ENCODE measurements at regions of chr1 and their contacts with region 1.

Region 1: DNA sequence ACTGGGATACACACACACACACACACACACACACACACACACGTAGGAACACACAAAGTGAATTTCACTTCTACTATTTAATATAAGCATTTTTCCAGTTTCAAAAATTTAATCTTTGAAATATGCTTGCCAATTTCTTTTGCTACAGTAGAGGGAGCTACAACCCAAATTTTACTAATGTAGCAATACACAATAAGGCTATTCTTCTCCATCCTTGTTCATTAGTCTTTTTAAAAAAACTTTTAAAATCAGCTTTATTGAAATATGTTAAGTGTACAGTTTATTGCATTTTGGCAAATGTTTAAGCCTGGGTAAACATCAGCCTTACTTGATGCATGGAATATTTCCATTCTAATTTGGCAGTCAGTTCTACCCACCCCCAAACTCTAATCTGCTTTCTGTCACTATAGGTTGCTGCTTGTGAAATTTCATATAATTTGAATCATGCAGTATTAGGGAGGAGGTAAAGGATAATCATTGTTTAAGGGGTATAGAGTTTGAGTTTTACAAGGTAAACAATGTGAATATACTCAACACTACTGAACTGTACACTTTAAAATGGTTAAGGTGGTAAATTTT is 93.0 kb upstream of the TENT5C start:
- DNase-seq: no peak
- H3K4me3 Mint-ChIP-seq: no peak overlapping the region
- H3K27ac Mint-ChIP-seq: no peak overlapping the region
- H3K4me1 Mint-ChIP-seq: peaks cover 2% of the 10 kb centered on the region
- H3K27me3 Mint-ChIP-seq: no peaks in the 10 kb centered on the region

Region 2: DNA sequence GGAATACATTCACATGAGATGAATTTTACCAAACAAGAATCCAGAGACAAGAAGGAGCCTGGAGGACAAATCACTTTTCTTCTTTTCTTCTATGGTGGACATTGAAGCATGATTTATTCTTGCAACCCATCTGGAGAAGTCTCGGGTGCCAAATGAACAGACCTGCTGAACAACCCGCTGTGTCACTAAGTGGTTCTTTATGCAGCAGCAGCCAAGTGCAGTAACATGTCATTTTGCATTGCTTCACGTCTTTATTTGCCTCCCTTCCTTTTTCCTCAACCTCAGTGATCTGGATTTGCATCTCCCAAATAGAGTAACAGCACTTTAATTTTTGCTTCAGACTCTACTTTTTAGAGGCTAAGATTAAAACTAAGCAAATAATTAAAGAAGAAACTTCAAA is 43.0 kb after region 1 on chr1:
- intact Hi-C with region 1: no loop called
- DNase-seq: no peak
- H3K4me3 Mint-ChIP-seq: no peak overlapping the region
- H3K27ac Mint-ChIP-seq: no peak overlapping the region
- H3K4me1 Mint-ChIP-seq: peaks cover 4% of the 10 kb centered on the region
- H3K27me3 Mint-ChIP-seq: peaks cover 20% of the 10 kb centered on the region

Region 3: DNA sequence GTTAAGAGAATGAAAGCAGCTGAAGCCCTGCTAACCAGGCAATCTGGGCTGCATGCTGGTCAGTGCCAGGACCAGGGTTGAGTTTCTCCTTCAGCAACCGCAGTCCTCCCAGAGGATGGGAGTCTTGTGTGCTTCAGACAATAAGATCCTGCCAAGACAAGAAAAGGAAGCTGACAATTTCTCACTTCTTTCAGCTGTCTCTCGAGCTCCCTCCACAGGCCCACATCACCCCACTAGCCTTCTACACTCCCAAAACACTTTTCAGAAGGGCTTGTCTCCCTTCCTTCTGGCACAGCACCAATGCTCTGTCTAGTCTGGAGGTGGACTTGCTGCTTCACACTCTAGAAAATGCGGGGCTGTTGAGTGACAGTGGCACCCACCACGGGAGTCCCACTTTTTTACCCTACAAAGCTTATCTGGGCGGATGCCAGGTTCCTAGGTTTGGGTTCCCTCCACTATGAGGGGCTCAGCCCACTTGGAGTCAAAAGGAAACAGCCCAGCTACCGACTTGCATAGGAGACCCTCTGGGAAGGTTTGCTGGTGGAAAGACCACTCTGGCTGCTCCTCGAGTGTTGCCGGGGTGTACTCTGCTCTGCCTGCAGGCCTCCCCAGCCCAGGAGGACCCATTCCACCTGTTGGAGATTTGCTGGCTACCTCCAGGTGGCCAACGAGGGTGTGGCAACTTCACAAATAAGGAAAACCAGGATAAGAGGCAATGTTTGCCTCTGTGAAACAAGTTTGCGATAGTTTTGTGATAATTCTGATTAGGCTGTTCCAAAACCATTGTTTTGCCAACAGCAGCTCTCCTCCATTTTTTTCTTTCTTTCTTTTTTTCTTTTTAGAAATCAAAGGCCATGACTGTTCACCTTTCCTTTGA is 161.9 kb after region 1 on chr1:
- intact Hi-C with region 1: loop called (anchors 1 kb)
- DNase-seq: peak; percentile 35
- H3K4me3 Mint-ChIP-seq: no peak overlapping the region
- H3K27ac Mint-ChIP-seq: no peak overlapping the region
- H3K4me1 Mint-ChIP-seq: peaks cover 25% of the 10 kb centered on the region
- H3K27me3 Mint-ChIP-seq: peaks cover 10% of the 10 kb centered on the region

Region 4: DNA sequence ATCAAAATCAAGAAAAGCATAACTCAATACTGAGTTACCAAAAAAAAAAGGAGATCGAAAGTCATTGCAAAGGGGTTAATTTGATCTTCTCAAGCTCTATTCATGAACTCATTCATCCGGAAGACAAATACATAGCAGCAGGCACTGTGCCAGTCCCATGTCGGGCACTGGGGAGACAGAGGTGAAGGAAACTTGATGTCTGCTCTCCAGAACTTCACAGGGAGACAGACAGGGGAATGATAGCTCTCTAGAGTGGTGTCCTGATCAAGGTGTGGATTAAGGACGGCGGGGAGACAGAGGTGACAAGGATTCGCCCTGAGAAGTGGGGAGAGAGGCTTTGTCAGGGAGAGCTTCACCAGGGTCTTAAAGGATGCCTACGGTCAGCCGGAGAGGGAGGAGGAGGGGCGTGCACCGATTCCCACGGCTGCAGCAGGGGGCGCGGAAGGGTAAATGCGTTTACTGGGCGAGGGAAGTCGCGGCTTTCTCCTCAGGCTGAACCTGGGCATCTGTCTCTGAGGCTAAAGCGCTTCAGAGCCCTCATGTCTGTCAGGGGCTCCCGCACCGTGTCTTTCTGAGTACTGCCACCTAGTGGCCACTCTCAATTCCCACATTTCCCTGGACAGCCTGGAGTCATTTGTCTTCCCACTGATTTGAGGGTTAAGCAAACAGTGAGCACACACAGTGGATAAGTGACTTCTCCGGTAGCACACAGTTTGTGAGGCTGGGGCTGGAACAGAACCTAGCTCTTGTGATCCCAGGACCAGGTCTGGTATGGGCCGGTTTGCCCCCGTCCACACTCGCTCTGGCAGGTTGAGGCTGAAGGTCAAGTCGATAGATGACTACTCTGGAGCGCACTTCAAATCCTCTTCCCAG is 245.8 kb after region 1 on chr1:
- intact Hi-C with region 1: loop called (anchors 1 kb)
- DNase-seq: peak; percentile 60
- H3K4me3 Mint-ChIP-seq: peak overlapping the region; percentile 75
- H3K27ac Mint-ChIP-seq: no peak overlapping the region
- H3K4me1 Mint-ChIP-seq: peaks cover 10% of the 10 kb centered on the region
- H3K27me3 Mint-ChIP-seq: peaks cover 37% of the 10 kb centered on the region

Region 5: DNA sequence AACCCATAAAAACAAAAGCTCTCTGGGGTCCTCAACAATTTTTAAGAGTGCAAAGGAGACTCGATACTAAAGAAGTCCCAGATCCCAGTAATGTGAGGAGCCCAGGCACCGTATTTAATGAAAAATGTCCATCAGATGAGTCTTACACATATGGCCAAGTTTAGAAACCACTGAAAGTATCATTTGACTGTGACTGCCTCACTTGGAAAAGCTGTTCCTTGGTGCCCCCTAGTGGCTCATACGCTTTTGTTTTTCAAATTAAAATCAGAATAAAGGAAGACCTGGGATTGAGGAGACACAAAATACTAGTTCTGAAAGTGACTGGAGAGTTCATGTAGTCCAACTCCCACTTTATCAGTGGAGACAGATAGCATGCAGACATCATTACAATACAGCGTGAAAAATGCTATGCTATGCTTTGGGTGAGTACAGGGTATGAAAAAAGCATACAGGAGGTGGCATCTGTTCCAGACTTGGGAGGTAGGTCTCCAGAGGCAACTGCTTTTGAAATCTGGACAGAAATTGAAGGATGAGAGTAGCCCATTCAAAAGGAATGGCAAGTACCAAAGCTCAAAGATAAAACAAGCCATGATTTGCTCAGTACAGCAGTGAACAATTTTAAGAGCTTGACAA is 382.8 kb after region 1 on chr1:
- intact Hi-C with region 1: loop called (anchors 2 kb)
- DNase-seq: peak; percentile 27
- H3K4me3 Mint-ChIP-seq: no peak overlapping the region
- H3K27ac Mint-ChIP-seq: no peak overlapping the region
- H3K4me1 Mint-ChIP-seq: no peaks in the 10 kb centered on the region
- H3K27me3 Mint-ChIP-seq: no peaks in the 10 kb centered on the region